Dorsolateral prefrontal cortex (tissue), 120 donors: ENCODE measurements at regions of chr7 and their contacts with region 1.

Region 1: GRCh38 chr7:138008547-138009349 is 6.9 kb upstream of the CREB3L2 start:
- DNase-seq: peak in 2 of 10 donors; percentile 8 to 26
- H3K4me3 ChIP-seq: peak overlapping the region in 28 of 59 donors; percentile 1 to 48 (median 23)
- H3K27ac ChIP-seq: peak overlapping the region in 16 of 59 donors; percentile 7 to 76 (median 42)
- H3K27me3 ChIP-seq: no peaks in the 10 kb centered on the region
- CTCF ChIP-seq: peak; percentile 84 to 99 (median 95)

Region 2: DNA sequence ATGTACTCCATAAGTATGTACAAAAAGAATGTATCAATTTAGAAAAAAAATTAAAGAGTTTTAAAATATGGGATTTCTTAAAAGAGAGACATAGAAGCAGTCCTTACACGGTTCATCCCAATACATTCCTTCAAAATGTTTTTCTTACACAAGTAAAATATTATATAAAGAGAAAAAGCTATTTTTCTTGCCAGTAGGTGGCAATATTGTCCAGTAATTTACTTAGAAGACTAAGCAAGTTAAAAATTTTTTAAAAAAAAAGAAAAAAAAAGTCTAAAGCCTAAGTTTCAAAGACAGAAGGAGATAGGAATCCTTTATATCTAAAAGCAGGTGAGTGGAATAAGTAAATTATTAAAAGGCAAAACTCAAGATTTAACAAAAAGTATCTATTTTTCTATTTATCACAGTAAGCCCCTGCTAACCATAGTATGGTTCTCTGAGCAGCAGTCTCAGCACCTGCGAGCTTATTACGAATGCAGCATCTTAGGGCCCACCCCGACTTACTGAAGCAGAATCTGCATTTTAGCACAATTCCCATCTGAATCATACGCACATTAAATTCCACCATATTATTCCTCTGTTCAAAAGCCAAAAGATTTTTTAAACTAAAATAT is 402.6 kb before region 1 on chr7:
- intact Hi-C with region 1: loop called (anchors 5 to 10 kb)
- DNase-seq: no peak
- H3K4me3 ChIP-seq: no peak overlapping the region
- H3K27ac ChIP-seq: no peak overlapping the region
- H3K27me3 ChIP-seq: no peaks in the 10 kb centered on the region
- CTCF ChIP-seq: peak; percentile 54 to 87 (median 74)

Region 3: DNA sequence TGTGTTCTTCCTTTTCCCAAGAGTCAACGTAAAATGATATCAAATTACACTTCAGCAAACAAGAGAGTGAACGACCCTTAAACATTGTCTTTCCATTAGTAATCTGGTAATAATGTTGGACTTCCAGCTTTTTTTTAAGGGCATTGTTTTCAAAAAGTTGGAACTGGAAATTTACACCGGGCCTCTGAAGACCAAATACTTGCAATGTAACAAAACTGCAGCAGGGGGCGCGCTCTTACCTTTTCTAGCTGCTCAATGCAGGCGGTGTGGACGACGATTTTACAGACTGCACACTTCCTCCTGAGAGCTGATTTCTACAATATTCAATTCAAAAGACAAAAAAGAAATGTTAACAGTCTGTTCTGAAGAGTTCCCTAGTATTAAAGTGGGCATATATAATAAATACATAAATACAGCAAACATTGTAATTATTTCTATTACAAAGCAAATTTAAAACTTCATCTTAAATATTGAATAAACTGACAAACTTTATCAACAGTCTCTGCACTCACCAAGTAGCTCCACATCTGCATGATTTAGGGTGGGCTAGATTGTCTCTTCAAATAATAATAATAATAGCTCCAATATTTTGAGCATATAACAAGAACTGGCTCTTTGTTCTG is 352.4 kb before region 1 on chr7:
- intact Hi-C with region 1: loop called (anchors 2 to 5 kb)
- DNase-seq: peak; percentile 64 to 90 (median 76)
- H3K4me3 ChIP-seq: no peak overlapping the region
- H3K27ac ChIP-seq: peak overlapping the region in 1 of 59 donors; percentile 11
- H3K27me3 ChIP-seq: no peaks in the 10 kb centered on the region
- CTCF ChIP-seq: peak; percentile 66 to 95 (median 88)

Region 4: GRCh38 chr7:137816696-137817320 is 191.9 kb before region 1 on chr7:
- intact Hi-C with region 1: loop called in 1 of 2 experiments (anchors 5 kb)
- DNase-seq: no peak
- H3K4me3 ChIP-seq: no peak overlapping the region
- H3K27ac ChIP-seq: peak overlapping the region in 1 of 59 donors; percentile 41
- H3K27me3 ChIP-seq: no peaks in the 10 kb centered on the region
- CTCF ChIP-seq: peak in 54 of 56 donors; percentile 12 to 67 (median 44)